OCI-LY7 (cell line): ENCODE measurements at regions of chr5 and their contacts with region 1.

Region 1: GRCh38 chr5:88746438-88746882 is 136.5 kb downstream of the MEF2C start:
- DNase-seq: peak; percentile 64
- H3K4me3 ChIP-seq: peak overlapping the region; percentile 24
- H3K27ac ChIP-seq: peak overlapping the region; percentile 44
- H3K4me1 ChIP-seq: peaks cover 18% of the 10 kb centered on the region
- CTCF ChIP-seq: no peak

Region 2: GRCh38 chr5:88756953-88757352 is 10.5 kb after region 1 on chr5:
- CTCF ChIA-PET with region 1: no interaction called
- POLR2A ChIA-PET with region 1: interaction called, 14 read pairs
- intact Hi-C with region 1: no loop called
- DNase-seq: no peak
- H3K4me3 ChIP-seq: no peak overlapping the region
- H3K27ac ChIP-seq: no peak overlapping the region
- H3K4me1 ChIP-seq: no peaks in the 10 kb centered on the region
- CTCF ChIP-seq: no peak

Region 3: GRCh38 chr5:88765798-88766197 is 19.3 kb after region 1 on chr5:
- CTCF ChIA-PET with region 1: no interaction called
- POLR2A ChIA-PET with region 1: interaction called, 12 read pairs
- intact Hi-C with region 1: no loop called
- DNase-seq: no peak
- H3K4me3 ChIP-seq: no peak overlapping the region
- H3K27ac ChIP-seq: no peak overlapping the region
- H3K4me1 ChIP-seq: no peaks in the 10 kb centered on the region
- CTCF ChIP-seq: no peak

Region 4: DNA sequence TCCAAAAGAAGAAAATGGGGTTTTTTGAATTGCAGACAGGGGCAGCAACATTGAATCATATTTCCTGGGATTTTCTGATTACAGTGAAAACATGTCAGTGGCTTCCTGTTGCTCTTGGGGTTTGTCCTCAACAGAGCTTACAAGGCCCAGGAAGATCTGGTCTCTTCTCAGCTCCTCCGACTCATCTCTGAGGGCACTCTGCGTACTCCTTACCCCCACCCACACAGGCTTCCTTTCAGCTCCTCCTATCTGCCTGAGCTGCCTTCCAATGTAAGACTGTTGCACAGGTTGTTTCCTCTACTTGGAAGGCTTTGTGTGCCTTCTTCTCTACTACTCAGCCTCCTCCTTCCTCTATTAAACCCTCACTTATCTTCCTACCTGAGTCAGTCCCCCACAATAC is 381.6 kb after region 1 on chr5:
- CTCF ChIA-PET with region 1: no interaction called
- POLR2A ChIA-PET with region 1: no interaction called
- intact Hi-C with region 1: no loop called
- DNase-seq: no peak
- H3K4me3 ChIP-seq: no peak overlapping the region
- H3K27ac ChIP-seq: no peak overlapping the region
- H3K4me1 ChIP-seq: no peaks in the 10 kb centered on the region
- CTCF ChIP-seq: no peak